ENCODE measurements at regions of chr11 and their contacts with region 1.

Region 1: DNA sequence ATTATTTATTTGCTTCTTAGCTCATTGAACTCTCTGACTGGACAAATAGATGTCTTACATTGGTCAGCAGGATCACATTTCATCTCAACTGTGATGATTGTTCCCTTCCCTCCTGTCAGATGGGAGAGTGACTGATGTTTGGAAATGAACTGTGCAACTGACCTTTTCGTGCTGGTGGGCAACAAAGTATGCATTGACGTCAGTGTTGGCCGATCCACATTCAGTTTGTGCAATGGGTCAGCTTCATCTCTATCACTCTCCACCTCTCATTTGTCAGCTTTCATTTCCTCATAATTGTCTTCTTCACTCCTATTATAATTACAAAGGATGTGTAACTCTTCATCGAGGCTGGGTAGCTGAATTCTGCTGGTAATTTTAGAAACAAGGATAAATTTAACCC is 71.3 kb downstream of the PPP2R1B start:
- DNase-seq: no peak
- H3K4me3 Mint-ChIP-seq: no peak overlapping the region
- H3K27ac Mint-ChIP-seq: no peak overlapping the region
- H3K4me1 Mint-ChIP-seq: peaks cover 12% of the 10 kb centered on the region
- H3K27me3 Mint-ChIP-seq: no peaks in the 10 kb centered on the region

Region 2: DNA sequence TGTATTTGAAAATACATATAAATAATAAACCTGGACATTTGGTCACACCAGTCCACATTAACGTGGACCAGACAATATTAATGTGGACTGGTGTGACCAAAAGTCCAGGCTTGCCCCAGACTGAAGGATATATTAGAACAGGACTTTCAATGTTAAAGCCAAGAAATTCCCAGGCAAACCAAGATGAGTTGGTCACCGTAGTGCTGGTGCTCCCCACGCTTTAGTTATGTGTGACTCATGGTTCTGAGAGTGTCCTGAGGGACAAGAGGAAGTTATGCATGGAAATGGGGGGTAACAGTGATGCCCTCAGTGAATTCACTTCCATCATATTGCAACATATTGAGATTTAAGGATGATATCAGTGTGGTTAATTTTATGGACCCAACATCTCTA is 347.1 kb before region 1 on chr11:
- CTCF ChIA-PET with region 1: no interaction called
- POLR2A ChIA-PET with region 1: no interaction called
- intact Hi-C with region 1: no loop called
- DNase-seq: no peak
- H3K4me3 Mint-ChIP-seq: no peak overlapping the region
- H3K27ac Mint-ChIP-seq: no peak overlapping the region
- H3K4me1 Mint-ChIP-seq: no peaks in the 10 kb centered on the region
- H3K27me3 Mint-ChIP-seq: peaks cover 2% of the 10 kb centered on the region

Region 3: DNA sequence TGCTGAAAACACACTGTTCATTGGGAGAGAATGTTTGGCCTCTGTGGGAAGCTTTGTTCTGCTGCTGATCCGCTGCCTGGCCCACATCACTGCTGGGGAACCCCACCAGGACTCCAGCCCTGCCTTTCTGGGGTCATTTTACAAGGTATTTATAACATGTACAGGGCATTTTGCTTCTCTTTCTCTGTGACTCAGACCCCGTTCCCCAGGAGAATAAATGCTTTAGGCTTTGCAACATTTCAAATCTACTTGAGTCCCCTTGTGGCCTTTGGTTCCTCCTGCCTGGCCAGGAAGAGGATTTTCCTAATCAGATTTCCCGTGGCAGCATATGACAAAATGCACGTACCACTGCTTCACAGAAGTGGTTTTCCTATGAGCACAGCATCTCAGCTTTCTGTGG is 225.7 kb before region 1 on chr11:
- CTCF ChIA-PET with region 1: no interaction called
- POLR2A ChIA-PET with region 1: no interaction called
- intact Hi-C with region 1: no loop called
- DNase-seq: no peak
- H3K4me3 Mint-ChIP-seq: no peak overlapping the region
- H3K27ac Mint-ChIP-seq: no peak overlapping the region
- H3K4me1 Mint-ChIP-seq: no peaks in the 10 kb centered on the region
- H3K27me3 Mint-ChIP-seq: peaks cover 7% of the 10 kb centered on the region

Region 4: GRCh38 chr11:111672949-111673348 is 21.9 kb before region 1 on chr11:
- CTCF ChIA-PET with region 1: no interaction called
- POLR2A ChIA-PET with region 1: no interaction called
- intact Hi-C with region 1: loop called (anchors 2 kb)
- DNase-seq: no peak
- H3K4me3 Mint-ChIP-seq: no peak overlapping the region
- H3K27ac Mint-ChIP-seq: peak overlapping the region; percentile 33
- H3K4me1 Mint-ChIP-seq: peaks cover 15% of the 10 kb centered on the region
- H3K27me3 Mint-ChIP-seq: no peaks in the 10 kb centered on the region

Region 5: DNA sequence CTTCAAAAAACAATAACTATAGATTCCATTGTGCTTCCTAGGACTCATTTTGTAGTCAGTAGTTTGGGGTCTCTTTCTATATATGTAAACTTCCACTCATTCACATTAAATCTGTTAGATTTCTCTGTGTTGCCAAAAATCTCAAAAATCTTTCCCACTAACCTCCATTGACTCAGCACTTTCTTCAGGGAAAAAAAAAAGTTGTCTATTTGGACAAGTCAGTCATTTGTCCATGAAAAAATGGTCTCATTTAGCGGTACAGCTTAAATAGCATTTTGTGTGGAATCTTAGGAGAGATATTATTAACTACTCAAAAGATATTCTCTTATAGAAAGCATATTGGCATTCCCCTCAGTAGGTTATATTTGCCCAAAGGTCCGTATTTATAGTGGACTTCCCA is 10.6 kb before region 1 on chr11:
- CTCF ChIA-PET with region 1: no interaction called
- POLR2A ChIA-PET with region 1: no interaction called
- intact Hi-C with region 1: no loop called
- DNase-seq: no peak
- H3K4me3 Mint-ChIP-seq: no peak overlapping the region
- H3K27ac Mint-ChIP-seq: no peak overlapping the region
- H3K4me1 Mint-ChIP-seq: no peaks in the 10 kb centered on the region
- H3K27me3 Mint-ChIP-seq: no peaks in the 10 kb centered on the region

Region 6: GRCh38 chr11:111833524-111833923 is 138.7 kb after region 1 on chr11:
- CTCF ChIA-PET with region 1: no interaction called
- POLR2A ChIA-PET with region 1: no interaction called
- intact Hi-C with region 1: loop called (anchors 1 kb)
- DNase-seq: no peak
- H3K4me3 Mint-ChIP-seq: no peak overlapping the region
- H3K27ac Mint-ChIP-seq: no peak overlapping the region
- H3K4me1 Mint-ChIP-seq: peaks cover 24% of the 10 kb centered on the region
- H3K27me3 Mint-ChIP-seq: no peaks in the 10 kb centered on the region

Measured in activated CD4-positive, alpha-beta memory T cell treated with anti-CD3 and anti-CD28 coated beads for 36 hours (primary cell).